Activated B cell treated with CpG ODN at 0.5 μM for 24 hours (primary cell): ENCODE measurements at regions of chr1 and their contacts with region 1.

Region 1: GRCh38 chr1:1399187-1399871 is at the start of gene CCNL2:
- DNase-seq: peak; percentile 98
- ATAC-seq: peak; percentile 96
- H3K4me3 Mint-ChIP-seq: peak within 1 kb of the TSS; percentile 92
- H3K27ac Mint-ChIP-seq: peak within 1 kb of the TSS; percentile 86
- H3K4me1 Mint-ChIP-seq: peaks cover 55% of the 10 kb centered on the region
- H3K27me3 Mint-ChIP-seq: no peaks in the 10 kb centered on the region
- CTCF ChIP-seq: no peak
- total RNA-seq, gene CCNL2: 188 and 225 TPM in 2 replicates

Region 2: DNA sequence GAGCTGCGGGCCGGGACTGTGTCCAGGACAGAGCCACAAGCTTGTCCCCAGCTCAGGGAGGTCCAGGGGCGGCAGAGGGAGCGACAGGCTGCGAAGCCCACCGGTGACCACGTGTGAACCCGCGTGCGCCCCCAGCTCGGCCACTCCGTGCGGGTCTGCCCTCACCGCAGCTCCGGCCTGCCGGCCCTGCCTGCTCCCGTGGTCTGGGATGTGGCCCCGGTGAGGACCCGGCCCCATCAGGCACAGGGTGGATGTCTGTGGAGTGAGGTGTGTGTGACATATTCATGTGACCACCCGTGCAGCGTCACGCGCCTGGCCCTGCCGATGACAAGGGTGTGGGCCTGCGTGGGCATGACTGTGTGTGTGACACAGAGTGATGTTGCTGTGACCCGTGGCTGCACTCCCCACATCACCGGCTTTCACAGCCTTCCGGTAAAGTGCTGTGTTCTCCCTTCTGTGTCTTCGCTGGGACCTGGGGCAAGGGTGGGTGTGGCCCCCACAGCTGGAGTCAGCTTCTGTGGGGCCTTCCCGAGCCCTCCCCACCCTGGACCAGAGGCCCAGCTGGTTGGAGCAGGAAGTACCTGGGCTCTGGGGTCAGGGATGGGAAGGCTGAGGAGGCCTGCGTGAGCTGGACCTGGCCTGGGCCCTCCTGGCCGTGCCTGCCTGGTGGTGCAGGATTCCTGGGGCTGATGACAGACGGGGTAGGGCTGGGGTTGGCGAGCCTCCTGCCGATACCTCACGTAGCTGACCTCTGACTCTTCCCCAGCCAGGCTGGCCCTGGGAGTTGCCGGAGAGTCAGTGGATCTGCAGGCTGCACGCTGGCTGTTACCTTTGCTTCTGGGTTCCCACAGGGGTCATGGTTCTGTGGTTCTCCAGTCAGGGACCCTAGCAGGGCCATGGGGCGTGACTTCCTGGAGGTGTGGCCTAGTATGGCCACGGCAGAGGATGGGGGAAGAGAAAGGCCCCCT is 329.3 kb before region 1 on chr1:
- CTCF ChIA-PET with region 1: no interaction called
- POLR2A ChIA-PET with region 1: no interaction called
- intact Hi-C with region 1: no loop called
- DNase-seq: peak; percentile 45
- ATAC-seq: peak; percentile 19
- H3K4me3 Mint-ChIP-seq: peak overlapping the region; percentile 66
- H3K27ac Mint-ChIP-seq: peak overlapping the region; percentile 81
- H3K4me1 Mint-ChIP-seq: peaks cover 33% of the 10 kb centered on the region
- H3K27me3 Mint-ChIP-seq: peaks cover 7% of the 10 kb centered on the region
- CTCF ChIP-seq: no peak

Region 3: DNA sequence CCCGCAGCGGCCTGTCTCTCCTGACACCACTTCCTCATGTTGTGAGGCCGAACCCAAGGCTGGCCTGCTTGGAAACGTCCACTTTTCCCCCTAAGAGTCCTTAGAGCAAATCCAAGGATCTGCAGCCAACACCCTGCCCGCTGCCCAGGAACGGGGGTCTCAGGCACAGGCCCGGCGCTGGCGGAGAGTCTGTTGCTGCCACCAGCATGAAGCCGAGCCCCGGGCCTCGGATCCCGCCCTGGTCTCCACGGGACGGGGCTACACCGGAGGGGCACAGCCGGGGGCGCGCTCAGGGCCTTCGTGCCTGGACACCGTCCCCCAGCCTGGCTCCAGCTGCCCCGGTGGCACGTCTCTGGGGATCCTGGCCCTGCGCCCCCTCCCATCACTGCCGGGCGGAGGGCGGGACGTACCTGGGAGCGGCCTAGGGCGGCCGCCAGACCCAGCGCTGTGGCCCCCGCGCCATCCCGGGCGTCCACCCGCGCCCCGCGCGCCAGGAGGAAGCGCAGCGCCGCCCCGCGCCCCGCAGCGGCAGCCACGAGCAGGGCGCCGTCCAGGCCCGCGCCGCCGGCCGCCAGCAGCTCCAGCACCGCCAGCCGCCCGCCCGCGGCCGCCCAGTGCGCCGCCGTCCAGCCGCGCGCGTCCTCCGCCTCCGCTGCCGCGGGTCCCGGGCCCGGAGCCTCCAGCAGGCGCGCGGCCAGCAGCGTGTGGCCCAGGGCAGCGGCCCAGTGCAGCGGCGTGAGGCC is 20.5 kb after region 1 on chr1:
- CTCF ChIA-PET with region 1: no interaction called
- POLR2A ChIA-PET with region 1: no interaction called
- intact Hi-C with region 1: no loop called
- DNase-seq: no peak
- ATAC-seq: peak; percentile 42
- H3K4me3 Mint-ChIP-seq: no peak overlapping the region
- H3K27ac Mint-ChIP-seq: no peak overlapping the region
- H3K4me1 Mint-ChIP-seq: peaks cover 1% of the 10 kb centered on the region
- H3K27me3 Mint-ChIP-seq: peaks cover 12% of the 10 kb centered on the region
- CTCF ChIP-seq: no peak

Region 4: DNA sequence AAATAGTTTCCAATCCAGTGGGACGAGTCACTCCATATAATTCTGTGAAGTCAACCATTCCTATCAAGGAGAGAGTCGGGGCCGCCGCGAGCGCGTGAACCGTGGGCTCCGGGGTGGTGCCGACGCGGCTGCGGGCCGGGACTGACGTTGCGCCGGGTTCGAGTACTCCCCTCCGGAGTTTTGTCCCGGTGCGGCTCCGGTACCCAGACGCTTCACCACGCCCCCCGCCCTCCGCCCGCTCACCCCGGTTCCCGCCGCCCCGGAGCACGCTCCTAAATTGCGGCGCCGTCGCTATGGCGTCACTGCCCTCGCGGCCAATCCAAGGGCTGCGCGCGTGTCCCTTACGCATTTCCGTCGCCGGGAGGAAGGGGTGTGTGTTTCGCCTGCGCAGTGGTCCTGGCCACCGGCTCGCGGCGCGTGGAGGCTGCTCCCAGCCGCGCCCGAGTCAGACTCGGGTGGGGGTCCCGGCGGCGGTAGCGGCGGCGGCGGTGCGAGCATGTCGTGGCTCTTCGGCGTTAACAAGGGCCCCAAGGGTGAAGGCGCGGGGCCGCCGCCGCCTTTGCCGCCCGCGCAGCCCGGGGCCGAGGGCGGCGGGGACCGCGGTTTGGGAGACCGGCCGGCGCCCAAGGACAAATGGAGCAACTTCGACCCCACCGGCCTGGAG is 72.2 kb after region 1 on chr1 and contains the start of gene ATAD3B:
- CTCF ChIA-PET with region 1: no interaction called
- POLR2A ChIA-PET with region 1: no interaction called
- intact Hi-C with region 1: loop called (anchors 1 kb)
- DNase-seq: peak; percentile 84
- ATAC-seq: peak; percentile 95
- H3K4me3 Mint-ChIP-seq: peak within 1 kb of the TSS; percentile 90
- H3K27ac Mint-ChIP-seq: peak within 1 kb of the TSS; percentile 82
- H3K4me1 Mint-ChIP-seq: peaks cover 25% of the 10 kb centered on the region
- H3K27me3 Mint-ChIP-seq: no peaks in the 10 kb centered on the region
- CTCF ChIP-seq: no peak
- total RNA-seq, gene ATAD3B: 47.4 and 49.5 TPM in 2 replicates

Region 5: GRCh38 chr1:1841575-1841995 is 442.3 kb after region 1 on chr1:
- CTCF ChIA-PET with region 1: no interaction called
- POLR2A ChIA-PET with region 1: no interaction called
- intact Hi-C with region 1: no loop called
- DNase-seq: no peak
- ATAC-seq: no peak
- H3K4me3 Mint-ChIP-seq: peak overlapping the region; percentile 70
- H3K27ac Mint-ChIP-seq: peak overlapping the region; percentile 74
- H3K4me1 Mint-ChIP-seq: peaks cover 73% of the 10 kb centered on the region
- H3K27me3 Mint-ChIP-seq: no peaks in the 10 kb centered on the region
- CTCF ChIP-seq: no peak